ENCODE measurements at regions of chr7 and their contacts with region 1.

Region 1: DNA sequence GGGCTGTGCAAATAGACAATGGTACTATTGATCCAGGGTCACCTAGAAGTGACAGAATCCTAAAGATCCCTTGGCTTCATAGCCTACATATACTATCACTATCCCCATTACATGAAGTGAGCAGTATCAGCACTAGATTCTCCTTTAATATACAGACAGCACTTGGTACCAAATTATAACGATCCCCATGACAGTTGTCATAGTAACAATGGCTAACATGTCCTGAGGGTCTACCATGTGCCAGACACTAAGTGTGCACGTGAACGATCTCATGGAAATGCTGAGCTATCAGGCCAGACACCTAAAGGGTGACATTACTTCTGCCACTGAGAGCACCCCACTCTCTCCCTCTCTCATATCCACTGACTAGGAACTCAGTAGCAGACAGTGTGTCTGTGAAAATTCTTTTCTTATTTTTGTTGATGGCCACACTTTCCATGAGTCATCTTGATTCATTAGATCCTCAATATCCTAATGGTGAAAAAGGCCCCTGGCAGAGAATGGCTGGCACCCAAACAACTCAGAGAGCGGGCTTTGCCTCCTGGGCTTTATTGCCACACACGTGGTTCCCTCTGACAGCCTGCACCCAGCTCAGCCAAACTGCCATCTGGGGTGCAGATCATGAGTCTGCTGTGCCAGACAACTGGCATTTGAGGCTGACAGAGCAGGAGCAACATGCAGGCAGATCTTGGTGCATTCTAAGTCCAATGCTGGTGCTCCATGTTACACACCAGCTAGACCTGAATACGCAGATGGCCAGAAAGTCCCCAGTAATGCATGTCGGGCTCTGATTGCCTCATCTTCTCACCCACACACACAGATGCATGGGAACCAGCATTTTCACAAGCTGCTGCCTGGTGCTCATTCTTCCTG is 176.3 kb downstream of the DGKI start:
- DNase-seq: no peak
- H3K4me3 ChIP-seq: no peak overlapping the region
- H3K4me3 Mint-ChIP-seq: no peak overlapping the region
- H3K27ac ChIP-seq: no peak overlapping the region
- H3K27ac Mint-ChIP-seq: no peak overlapping the region
- H3K4me1 ChIP-seq: no peaks in the 10 kb centered on the region
- H3K4me1 Mint-ChIP-seq: peaks cover 0 to 3% (median 1%) of the 10 kb centered on the region in 4 donors
- H3K27me3 ChIP-seq: no peaks in the 10 kb centered on the region
- H3K27me3 Mint-ChIP-seq: peaks cover 8 to 16% of the 10 kb centered on the region in 2 donors

Region 2: DNA sequence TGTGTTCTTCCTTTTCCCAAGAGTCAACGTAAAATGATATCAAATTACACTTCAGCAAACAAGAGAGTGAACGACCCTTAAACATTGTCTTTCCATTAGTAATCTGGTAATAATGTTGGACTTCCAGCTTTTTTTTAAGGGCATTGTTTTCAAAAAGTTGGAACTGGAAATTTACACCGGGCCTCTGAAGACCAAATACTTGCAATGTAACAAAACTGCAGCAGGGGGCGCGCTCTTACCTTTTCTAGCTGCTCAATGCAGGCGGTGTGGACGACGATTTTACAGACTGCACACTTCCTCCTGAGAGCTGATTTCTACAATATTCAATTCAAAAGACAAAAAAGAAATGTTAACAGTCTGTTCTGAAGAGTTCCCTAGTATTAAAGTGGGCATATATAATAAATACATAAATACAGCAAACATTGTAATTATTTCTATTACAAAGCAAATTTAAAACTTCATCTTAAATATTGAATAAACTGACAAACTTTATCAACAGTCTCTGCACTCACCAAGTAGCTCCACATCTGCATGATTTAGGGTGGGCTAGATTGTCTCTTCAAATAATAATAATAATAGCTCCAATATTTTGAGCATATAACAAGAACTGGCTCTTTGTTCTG is 14.1 kb before region 1 on chr7:
- CTCF ChIA-PET with region 1: interaction called, 23 read pairs
- POLR2A ChIA-PET with region 1: no interaction called
- intact Hi-C with region 1: no loop called
- DNase-seq: peak; percentile 20 to 59 (median 32)
- H3K4me3 ChIP-seq: no peak overlapping the region
- H3K4me3 Mint-ChIP-seq: no peak overlapping the region
- H3K27ac ChIP-seq: no peak overlapping the region
- H3K27ac Mint-ChIP-seq: no peak overlapping the region
- H3K4me1 ChIP-seq: no peaks in the 10 kb centered on the region
- H3K4me1 Mint-ChIP-seq: peaks cover 0 to 4% (median 0%) of the 10 kb centered on the region in 4 donors
- H3K27me3 ChIP-seq: no peaks in the 10 kb centered on the region
- H3K27me3 Mint-ChIP-seq: peaks cover 5% of the 10 kb centered on the region in 2 donors

Measured in CD4-positive, alpha-beta memory T cell (primary cell).